B cell (primary cell): ENCODE measurements at regions of chr19 and their contacts with region 1.

Region 1: GRCh38 chr19:10269333-10270179 is 1.4 kb upstream of the ICAM1 start:
- DNase-seq: peak; percentile 91
- ATAC-seq: peak; percentile 43
- H3K4me3 ChIP-seq: peak overlapping the region; percentile 1 to 72 (median 56)
- H3K4me3 Mint-ChIP-seq: peak overlapping the region; percentile 88
- H3K27ac ChIP-seq: peak overlapping the region; percentile 90 to 97
- H3K27ac Mint-ChIP-seq: peak overlapping the region; percentile 94
- H3K4me1 ChIP-seq: peaks cover 13 to 35% of the 10 kb centered on the region in 2 donors
- H3K4me1 Mint-ChIP-seq: peaks cover 32% of the 10 kb centered on the region
- H3K27me3 ChIP-seq: no peaks in the 10 kb centered on the region
- H3K27me3 Mint-ChIP-seq: no peaks in the 10 kb centered on the region
- CTCF ChIP-seq: peak; percentile 93

Region 2: GRCh38 chr19:9934132-9934950 is 335.2 kb before region 1 on chr19:
- CTCF ChIA-PET with region 1: interaction called, 27 read pairs
- POLR2A ChIA-PET with region 1: no interaction called
- intact Hi-C with region 1: loop called (anchors 5 kb)
- DNase-seq: peak; percentile 84
- ATAC-seq: peak; percentile 82
- H3K4me3 ChIP-seq: no peak overlapping the region
- H3K4me3 Mint-ChIP-seq: no peak overlapping the region
- H3K27ac ChIP-seq: no peak overlapping the region
- H3K27ac Mint-ChIP-seq: no peak overlapping the region
- H3K4me1 ChIP-seq: peaks cover 22 to 30% of the 10 kb centered on the region in 2 donors
- H3K4me1 Mint-ChIP-seq: peaks cover 26% of the 10 kb centered on the region
- H3K27me3 ChIP-seq: peaks cover 0 to 60% (median 34%) of the 10 kb centered on the region in 4 experiments
- H3K27me3 Mint-ChIP-seq: peaks cover 51% of the 10 kb centered on the region
- CTCF ChIP-seq: peak; percentile 89

Region 3: DNA sequence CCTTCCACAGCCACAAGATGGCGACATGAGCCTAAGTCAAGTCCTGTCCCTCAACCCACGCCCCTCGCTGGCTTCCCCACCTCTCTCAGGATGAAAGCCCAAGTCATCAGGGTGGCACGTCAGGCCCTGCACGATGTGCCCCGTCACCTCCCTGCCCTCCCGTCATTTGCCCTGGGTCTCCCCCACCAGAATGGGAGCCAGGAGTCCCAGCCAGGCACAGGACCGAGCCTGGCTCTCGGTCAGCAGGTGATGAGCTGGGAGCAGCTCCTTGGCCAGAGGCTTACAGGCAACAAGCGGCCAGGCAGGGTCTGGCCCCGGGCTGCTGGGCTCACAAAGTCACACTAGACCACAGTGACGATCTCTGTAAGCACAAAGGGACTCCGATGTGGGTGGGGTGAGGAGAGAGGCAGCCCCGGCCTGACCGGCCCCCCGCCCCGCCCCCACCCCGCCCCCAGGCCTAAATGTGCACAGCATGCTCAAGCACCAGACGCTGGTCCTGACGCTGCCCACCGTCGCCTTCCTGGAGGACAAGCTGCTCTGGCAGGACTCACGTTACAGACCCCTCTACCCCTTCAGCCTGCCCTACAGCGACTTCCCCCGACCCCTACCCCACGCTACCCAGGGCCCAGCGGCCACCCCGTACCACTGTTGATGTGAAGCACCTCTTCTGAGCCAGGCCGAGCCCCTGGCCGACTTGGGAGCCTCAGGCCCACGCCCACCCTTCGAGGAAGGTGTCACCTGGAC is 10.2 kb before region 1 on chr19:
- CTCF ChIA-PET with region 1: interaction called, 73 read pairs
- POLR2A ChIA-PET with region 1: interaction called, 15 read pairs
- intact Hi-C with region 1: no loop called
- DNase-seq: peak; percentile 90
- ATAC-seq: peak; percentile 89
- H3K4me3 ChIP-seq: no peak overlapping the region
- H3K4me3 Mint-ChIP-seq: no peak overlapping the region
- H3K27ac ChIP-seq: no peak overlapping the region
- H3K27ac Mint-ChIP-seq: no peak overlapping the region
- H3K4me1 ChIP-seq: peaks cover 0 to 3% of the 10 kb centered on the region in 2 donors
- H3K4me1 Mint-ChIP-seq: no peaks in the 10 kb centered on the region
- H3K27me3 ChIP-seq: no peaks in the 10 kb centered on the region
- H3K27me3 Mint-ChIP-seq: no peaks in the 10 kb centered on the region
- CTCF ChIP-seq: peak; percentile 80

Region 4: GRCh38 chr19:10292206-10292788 is 22.7 kb after region 1 on chr19:
- CTCF ChIA-PET with region 1: interaction called, 116 read pairs
- POLR2A ChIA-PET with region 1: interaction called, 27 read pairs
- intact Hi-C with region 1: loop called (anchors 1 kb)
- DNase-seq: no peak
- ATAC-seq: peak; percentile 28
- H3K4me3 ChIP-seq: peak overlapping the region in 4 of 5 experiments; percentile 13 to 63 (median 40)
- H3K4me3 Mint-ChIP-seq: peak overlapping the region; percentile 87
- H3K27ac ChIP-seq: no peak overlapping the region
- H3K27ac Mint-ChIP-seq: peak overlapping the region; percentile 26
- H3K4me1 ChIP-seq: peaks cover 86 to 89% of the 10 kb centered on the region in 2 donors
- H3K4me1 Mint-ChIP-seq: peaks cover 70% of the 10 kb centered on the region
- H3K27me3 ChIP-seq: peaks cover 0 to 90% (median 61%) of the 10 kb centered on the region in 4 experiments
- H3K27me3 Mint-ChIP-seq: peaks cover 45% of the 10 kb centered on the region
- CTCF ChIP-seq: no peak

Region 5: GRCh38 chr19:10332955-10333757 is 63.6 kb after region 1 on chr19 and contains the start of gene RAVER1:
- CTCF ChIA-PET with region 1: interaction called, 14 read pairs
- POLR2A ChIA-PET with region 1: interaction called, 9 read pairs
- intact Hi-C with region 1: loop called (anchors 1 kb)
- DNase-seq: peak; percentile 99
- ATAC-seq: peak; percentile 97
- H3K4me3 ChIP-seq: peak within 1 kb of the TSS; percentile 63 to 94 (median 83)
- H3K4me3 Mint-ChIP-seq: peak within 1 kb of the TSS; percentile 97
- H3K27ac ChIP-seq: peak within 1 kb of the TSS; percentile 90 to 91
- H3K27ac Mint-ChIP-seq: peak within 1 kb of the TSS; percentile 97
- H3K4me1 ChIP-seq: peaks cover 14 to 24% of the 10 kb centered on the region in 2 donors
- H3K4me1 Mint-ChIP-seq: peaks cover 21% of the 10 kb centered on the region
- H3K27me3 ChIP-seq: no peaks in the 10 kb centered on the region
- H3K27me3 Mint-ChIP-seq: no peaks in the 10 kb centered on the region
- CTCF ChIP-seq: no peak
- total RNA-seq, gene RAVER1: 54.6 and 62.7 TPM in 2 replicates

Region 6: GRCh38 chr19:10353793-10354391 is 84.3 kb after region 1 on chr19:
- CTCF ChIA-PET with region 1: no interaction called
- POLR2A ChIA-PET with region 1: no interaction called
- intact Hi-C with region 1: no loop called
- DNase-seq: peak; percentile 44
- ATAC-seq: peak; percentile 36
- H3K4me3 ChIP-seq: no peak overlapping the region
- H3K4me3 Mint-ChIP-seq: no peak overlapping the region
- H3K27ac ChIP-seq: no peak overlapping the region
- H3K27ac Mint-ChIP-seq: no peak overlapping the region
- H3K4me1 ChIP-seq: no peaks in the 10 kb centered on the region
- H3K4me1 Mint-ChIP-seq: no peaks in the 10 kb centered on the region
- H3K27me3 ChIP-seq: no peaks in the 10 kb centered on the region
- H3K27me3 Mint-ChIP-seq: no peaks in the 10 kb centered on the region
- CTCF ChIP-seq: no peak

Region 7: GRCh38 chr19:10380313-10381102 is 111.0 kb after region 1 on chr19 and contains the start of gene TYK2:
- CTCF ChIA-PET with region 1: interaction called, 570 read pairs
- POLR2A ChIA-PET with region 1: interaction called, 32 read pairs
- intact Hi-C with region 1: loop called (anchors 2 kb)
- DNase-seq: peak; percentile 99
- ATAC-seq: peak; percentile 91
- H3K4me3 ChIP-seq: peak within 1 kb of the TSS; percentile 63 to 99 (median 90)
- H3K4me3 Mint-ChIP-seq: peak within 1 kb of the TSS; percentile 87
- H3K27ac ChIP-seq: peak within 1 kb of the TSS; percentile 78 to 91
- H3K27ac Mint-ChIP-seq: peak within 1 kb of the TSS; percentile 91
- H3K4me1 ChIP-seq: peaks cover 10 to 17% of the 10 kb centered on the region in 2 donors
- H3K4me1 Mint-ChIP-seq: peaks cover 21% of the 10 kb centered on the region
- H3K27me3 ChIP-seq: no peaks in the 10 kb centered on the region
- H3K27me3 Mint-ChIP-seq: no peaks in the 10 kb centered on the region
- CTCF ChIP-seq: no peak
- total RNA-seq, gene TYK2: 337 and 347 TPM in 2 replicates

Region 8: DNA sequence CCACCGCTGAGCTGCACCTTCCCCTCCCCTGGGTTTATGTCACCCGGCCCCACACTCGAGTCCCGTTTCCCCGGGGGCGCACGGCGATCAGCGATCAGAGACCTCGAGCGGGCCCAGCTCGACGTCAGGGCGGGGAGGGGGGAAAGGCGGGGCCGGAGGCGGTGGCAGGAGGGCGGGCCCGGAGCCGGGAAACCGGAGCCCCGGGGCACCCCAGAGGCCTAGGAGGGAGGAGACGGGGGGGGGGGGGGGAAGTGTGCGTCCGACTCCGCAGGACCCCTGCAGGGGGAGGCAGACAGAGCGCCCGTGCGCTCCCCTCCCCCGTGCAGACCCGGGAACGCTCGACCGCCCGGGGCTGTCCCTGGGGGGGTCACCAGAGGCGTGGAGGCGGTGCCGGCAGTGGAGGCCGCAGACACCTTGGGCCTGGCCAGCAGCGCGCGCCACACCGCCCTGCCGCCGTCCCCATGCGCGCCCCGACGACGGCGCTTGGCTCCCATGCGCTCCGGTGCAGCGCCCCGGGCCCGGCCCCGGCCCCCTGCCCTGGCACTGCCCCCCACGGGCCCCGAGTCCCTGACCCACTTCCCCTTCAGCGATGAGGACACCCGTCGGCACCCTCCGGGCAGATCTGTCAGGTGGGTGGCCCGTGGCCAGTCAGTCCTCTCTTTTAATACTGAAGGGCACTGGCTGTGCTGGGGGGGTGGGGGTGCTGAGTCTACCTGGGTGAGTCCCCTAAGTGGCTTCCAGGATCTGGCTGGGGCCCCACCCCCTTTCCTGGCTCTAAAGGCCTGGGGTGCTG is 162.6 kb after region 1 on chr19:
- CTCF ChIA-PET with region 1: interaction called, 18 read pairs
- POLR2A ChIA-PET with region 1: interaction called, 6 read pairs
- intact Hi-C with region 1: no loop called
- DNase-seq: peak; percentile 88
- ATAC-seq: peak; percentile 53
- H3K4me3 ChIP-seq: peak overlapping the region in 4 of 5 experiments; percentile 29 to 60 (median 43)
- H3K4me3 Mint-ChIP-seq: peak overlapping the region; percentile 94
- H3K27ac ChIP-seq: no peak overlapping the region
- H3K27ac Mint-ChIP-seq: peak overlapping the region; percentile 91
- H3K4me1 ChIP-seq: peaks cover 49 to 55% of the 10 kb centered on the region in 2 donors
- H3K4me1 Mint-ChIP-seq: peaks cover 60% of the 10 kb centered on the region
- H3K27me3 ChIP-seq: peaks cover 0 to 25% (median 12%) of the 10 kb centered on the region in 4 experiments
- H3K27me3 Mint-ChIP-seq: peaks cover 13% of the 10 kb centered on the region
- CTCF ChIP-seq: no peak

Region 9: DNA sequence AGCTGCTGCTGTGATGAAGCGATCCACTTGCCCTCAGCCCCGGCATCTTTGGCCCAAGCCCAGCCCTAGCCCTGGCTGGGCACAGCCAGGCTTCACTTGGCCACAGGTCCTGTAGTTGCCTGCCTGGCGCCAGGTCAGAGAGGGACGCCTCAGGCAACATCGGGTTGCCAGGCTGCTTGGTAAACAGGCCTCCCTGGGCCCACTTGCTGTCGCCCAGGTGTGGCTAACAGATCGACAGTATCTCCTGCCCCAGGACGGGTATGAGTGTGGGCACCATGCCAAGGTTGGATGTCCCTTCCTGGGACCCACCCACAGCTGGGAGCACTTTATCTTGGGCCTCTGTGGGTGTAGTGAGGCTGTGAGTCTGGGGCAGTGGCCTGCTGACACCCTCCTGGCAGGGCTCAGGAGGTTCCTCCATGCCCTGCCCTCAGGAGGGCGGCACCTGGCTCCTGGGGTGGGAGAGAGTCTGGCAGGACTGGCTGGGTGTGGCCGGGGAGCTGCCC is 629.6 kb after region 1 on chr19:
- CTCF ChIA-PET with region 1: no interaction called
- POLR2A ChIA-PET with region 1: no interaction called
- intact Hi-C with region 1: no loop called
- DNase-seq: no peak
- ATAC-seq: no peak
- H3K4me3 ChIP-seq: no peak overlapping the region
- H3K4me3 Mint-ChIP-seq: no peak overlapping the region
- H3K27ac ChIP-seq: no peak overlapping the region
- H3K27ac Mint-ChIP-seq: no peak overlapping the region
- H3K4me1 ChIP-seq: no peaks in the 10 kb centered on the region
- H3K4me1 Mint-ChIP-seq: peaks cover 8% of the 10 kb centered on the region
- H3K27me3 ChIP-seq: no peaks in the 10 kb centered on the region
- H3K27me3 Mint-ChIP-seq: no peaks in the 10 kb centered on the region
- CTCF ChIP-seq: no peak